ENCODE measurements at regions of chr1 and their contacts with region 1.

Region 1: DNA sequence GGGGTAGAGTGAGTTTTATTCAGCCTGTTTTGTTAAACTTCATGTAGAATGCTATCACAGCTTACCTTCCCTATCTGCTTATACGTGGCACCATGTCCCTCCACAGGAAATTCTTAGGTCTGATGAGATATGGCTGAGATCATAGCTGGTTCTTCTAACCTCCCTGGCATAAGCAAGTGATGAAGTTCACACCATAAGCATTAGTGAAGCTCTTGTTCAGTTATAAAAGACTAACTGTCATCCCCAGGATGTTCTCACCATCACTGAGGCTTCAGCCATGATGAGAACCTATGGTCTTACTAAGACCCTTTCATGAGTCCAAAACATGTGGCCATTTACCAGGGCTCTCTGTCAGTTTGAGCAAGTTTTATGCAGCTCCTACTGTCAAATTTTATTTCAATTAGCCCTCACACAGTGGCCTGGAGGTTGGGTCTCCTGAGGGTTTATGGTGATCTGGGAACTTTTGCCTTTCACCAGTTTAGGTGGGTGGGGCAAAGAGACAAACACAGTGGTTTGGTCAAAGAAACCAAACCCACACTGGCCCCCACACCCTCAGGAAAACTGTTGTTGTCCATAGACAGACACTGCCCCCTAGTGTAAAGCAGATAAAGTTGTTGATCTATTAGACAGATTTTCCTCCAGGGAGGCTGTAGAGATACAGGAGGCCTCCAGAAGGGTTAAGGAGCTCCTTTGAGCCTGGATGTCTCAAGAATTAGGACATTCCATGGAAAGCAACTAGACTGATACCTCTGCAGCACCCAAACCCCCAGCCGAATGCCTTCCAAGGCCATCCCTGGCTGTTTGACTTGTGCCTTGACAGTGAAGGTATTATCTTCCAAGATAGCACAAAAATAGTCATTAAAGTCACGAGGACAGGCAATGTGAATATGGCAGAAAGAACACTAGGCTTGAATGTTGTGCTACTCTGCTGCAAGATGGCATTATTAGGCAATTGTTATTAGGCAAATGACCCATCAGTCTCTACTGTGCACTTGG is 5.0 kb downstream of the SLC22A15 start:
- DNase-seq: peak; percentile 63
- H3K4me3 Mint-ChIP-seq: no peak overlapping the region
- H3K27ac Mint-ChIP-seq: no peak overlapping the region
- H3K4me1 Mint-ChIP-seq: peaks cover 29% of the 10 kb centered on the region
- H3K27me3 Mint-ChIP-seq: no peaks in the 10 kb centered on the region
- CTCF ChIP-seq: peak; percentile 46

Region 2: GRCh38 chr1:115802416-115802815 is 178.9 kb before region 1 on chr1:
- CTCF ChIA-PET with region 1: interaction called, 24 read pairs
- POLR2A ChIA-PET with region 1: interaction called, 20 read pairs
- intact Hi-C with region 1: loop called (anchors 1 kb)
- DNase-seq: no peak
- H3K4me3 Mint-ChIP-seq: no peak overlapping the region
- H3K27ac Mint-ChIP-seq: no peak overlapping the region
- H3K4me1 Mint-ChIP-seq: no peaks in the 10 kb centered on the region
- H3K27me3 Mint-ChIP-seq: no peaks in the 10 kb centered on the region
- CTCF ChIP-seq: no peak

Region 3: DNA sequence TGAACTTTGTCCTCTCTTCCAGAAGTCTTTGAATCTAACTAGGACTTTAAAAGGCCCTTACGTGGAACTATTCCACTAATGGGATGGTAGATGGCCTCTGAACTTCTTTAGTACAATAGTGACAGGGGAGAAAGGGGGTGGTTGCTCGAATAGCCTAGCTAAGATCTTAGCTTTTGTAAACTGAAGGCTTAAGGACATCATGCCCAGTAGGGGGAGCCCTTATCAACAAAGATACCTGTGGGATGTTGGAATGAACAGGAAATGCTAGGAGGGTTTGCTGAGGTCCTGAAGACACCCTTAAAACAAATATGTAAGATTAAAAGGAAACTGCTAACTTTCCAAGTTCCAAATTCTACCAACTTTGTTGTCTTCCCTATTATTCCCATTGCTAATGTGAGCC is 173.6 kb before region 1 on chr1:
- CTCF ChIA-PET with region 1: interaction called, 39 read pairs
- POLR2A ChIA-PET with region 1: interaction called, 20 read pairs
- intact Hi-C with region 1: loop called (anchors 1 kb)
- DNase-seq: peak; percentile 82
- H3K4me3 Mint-ChIP-seq: no peak overlapping the region
- H3K27ac Mint-ChIP-seq: no peak overlapping the region
- H3K4me1 Mint-ChIP-seq: peaks cover 13% of the 10 kb centered on the region
- H3K27me3 Mint-ChIP-seq: no peaks in the 10 kb centered on the region
- CTCF ChIP-seq: peak; percentile 62

Region 4: DNA sequence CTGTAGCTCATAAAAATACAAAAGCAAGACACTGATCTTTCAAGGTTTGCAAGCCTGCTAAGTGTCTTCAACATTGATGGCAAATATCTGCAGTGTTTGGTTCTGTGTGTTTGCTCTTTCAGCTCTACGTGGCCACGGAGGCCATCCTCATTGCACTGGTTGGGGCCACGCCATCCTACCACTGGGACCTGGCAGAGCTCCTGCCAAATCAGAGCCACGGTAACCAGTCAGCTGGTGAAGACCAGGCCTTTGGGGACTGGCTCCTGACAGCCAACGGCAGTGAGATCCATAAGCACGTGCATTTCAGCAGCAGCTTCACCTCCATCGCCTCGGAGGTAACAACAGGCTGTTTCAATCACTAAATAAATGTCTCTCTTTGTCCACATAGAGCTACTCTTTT is 10.6 kb after region 1 on chr1:
- CTCF ChIA-PET with region 1: interaction called, 15 read pairs
- POLR2A ChIA-PET with region 1: interaction called, 9 read pairs
- intact Hi-C with region 1: no loop called
- DNase-seq: no peak
- H3K4me3 Mint-ChIP-seq: no peak overlapping the region
- H3K27ac Mint-ChIP-seq: no peak overlapping the region
- H3K4me1 Mint-ChIP-seq: peaks cover 6% of the 10 kb centered on the region
- H3K27me3 Mint-ChIP-seq: no peaks in the 10 kb centered on the region
- CTCF ChIP-seq: no peak

Region 5: GRCh38 chr1:116001739-116002487 is 20.6 kb after region 1 on chr1:
- CTCF ChIA-PET with region 1: interaction called, 12 read pairs
- POLR2A ChIA-PET with region 1: interaction called, 6 read pairs
- intact Hi-C with region 1: no loop called
- DNase-seq: peak; percentile 14
- H3K4me3 Mint-ChIP-seq: no peak overlapping the region
- H3K27ac Mint-ChIP-seq: peak overlapping the region; percentile 86
- H3K4me1 Mint-ChIP-seq: peaks cover 33% of the 10 kb centered on the region
- H3K27me3 Mint-ChIP-seq: no peaks in the 10 kb centered on the region
- CTCF ChIP-seq: no peak

Region 6: DNA sequence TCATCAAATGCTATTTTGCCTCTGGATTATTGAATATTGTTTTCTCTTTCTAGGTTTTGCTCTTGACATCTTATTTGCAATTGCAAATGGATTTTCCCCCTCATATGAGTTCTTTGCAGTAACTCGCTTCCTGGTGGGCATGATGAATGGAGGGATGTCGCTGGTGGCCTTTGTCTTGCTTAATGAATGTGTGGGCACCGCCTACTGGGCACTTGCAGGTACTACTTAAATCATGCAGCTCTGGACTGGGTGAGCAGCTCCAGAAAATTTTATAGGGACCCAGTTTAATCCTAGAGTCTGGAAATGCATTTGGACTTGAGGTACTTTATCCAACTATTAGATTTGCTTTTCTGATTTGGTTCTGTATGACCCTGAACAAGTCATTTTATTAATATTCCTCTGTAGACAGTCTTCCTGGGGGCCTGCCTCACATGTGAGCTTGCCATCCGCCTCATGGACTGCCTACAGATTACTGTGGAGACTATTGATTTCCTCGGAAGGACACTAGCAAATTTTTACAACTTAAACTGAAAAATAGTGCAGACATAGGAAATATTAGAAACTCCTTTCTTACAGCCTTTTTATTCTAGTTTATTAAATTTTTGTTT is 39.5 kb after region 1 on chr1:
- CTCF ChIA-PET with region 1: interaction called, 31 read pairs
- POLR2A ChIA-PET with region 1: interaction called, 6 read pairs
- intact Hi-C with region 1: no loop called
- DNase-seq: peak; percentile 75
- H3K4me3 Mint-ChIP-seq: no peak overlapping the region
- H3K27ac Mint-ChIP-seq: no peak overlapping the region
- H3K4me1 Mint-ChIP-seq: peaks cover 5% of the 10 kb centered on the region
- H3K27me3 Mint-ChIP-seq: no peaks in the 10 kb centered on the region
- CTCF ChIP-seq: peak; percentile 72

Measured in MCF 10A (cell line).